Posterior vena cava (tissue), 2 donors: ENCODE measurements at regions of chr16 and their contacts with region 1.

Region 1: GRCh38 chr16:25888868-25889267 is 197.1 kb downstream of the HS3ST4 start:
- DNase-seq: no peak

Region 2: GRCh38 chr16:25366078-25366477 is 522.8 kb before region 1 on chr16:
- intact Hi-C with region 1: loop called in 1 of 2 experiments (anchors 10 kb)
- DNase-seq: no peak

Region 3: GRCh38 chr16:25796239-25796638 is 92.6 kb before region 1 on chr16:
- intact Hi-C with region 1: no loop called
- DNase-seq: no peak

Region 4: GRCh38 chr16:25925421-25925820 is 36.6 kb after region 1 on chr16:
- intact Hi-C with region 1: no loop called
- DNase-seq: no peak